IMR-90 (cell line): ENCODE measurements at regions of chr9 and their contacts with region 1.

Region 1: DNA sequence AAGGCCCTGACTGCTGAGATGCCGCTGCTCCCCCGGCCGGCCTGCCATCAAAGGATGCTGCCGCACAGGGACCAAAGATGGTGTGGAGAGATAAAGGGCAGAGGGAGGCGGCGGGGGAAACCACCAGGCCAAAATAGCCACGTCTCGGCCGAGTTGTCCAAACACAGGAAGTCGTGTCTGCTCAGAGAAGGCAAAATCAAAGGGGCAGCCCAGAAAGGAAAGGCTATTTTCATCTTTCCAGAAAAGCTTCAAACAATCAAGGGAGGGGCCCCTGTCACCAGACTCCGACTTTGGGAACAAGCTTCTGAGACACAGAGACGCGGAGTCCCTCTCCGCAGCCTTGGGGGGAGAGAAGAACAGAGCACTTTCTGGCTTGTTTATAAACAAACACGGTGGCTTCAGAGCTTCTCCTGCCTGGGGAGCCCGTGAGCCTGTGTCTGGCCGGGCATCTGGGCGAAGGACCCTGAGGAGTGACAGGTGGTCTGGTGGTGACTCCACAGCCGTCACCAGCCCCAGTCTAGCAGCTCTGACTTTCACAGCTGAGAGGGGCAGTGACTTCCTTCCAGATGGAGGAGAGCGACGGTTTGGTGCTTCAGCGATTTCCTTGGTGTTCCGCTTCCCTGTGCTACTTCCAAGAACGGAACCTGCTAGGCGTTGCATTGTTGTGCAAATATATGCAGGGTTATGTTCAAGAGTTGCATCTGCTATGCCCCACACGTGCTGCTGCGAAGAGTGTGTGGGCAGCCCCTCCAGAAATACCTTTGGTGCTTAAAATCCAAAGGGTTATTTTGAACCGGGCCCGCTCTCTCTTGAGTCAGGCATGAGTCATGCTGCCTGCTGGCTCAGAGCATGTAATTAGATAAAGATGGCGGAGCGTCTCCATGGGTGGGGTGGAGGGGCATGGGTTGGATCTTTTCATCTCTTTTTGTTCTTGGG is 24.0 kb downstream of the ADAMTSL2 start:
- DNase-seq: peak; percentile 85
- ATAC-seq: peak; percentile 88
- H3K4me3 ChIP-seq: no peak overlapping the region
- H3K27ac ChIP-seq: peak overlapping the region; percentile 0; the same call in 1 of the 2 replicates
- H3K4me1 ChIP-seq: peaks cover 18% of the 10 kb centered on the region
- H3K27me3 ChIP-seq: peaks cover 5% of the 10 kb centered on the region; the same call in 1 of the 2 replicates
- CTCF ChIP-seq: no peak
- POLR2A ChIP-seq: no peak
- RAD21 ChIP-seq: no peak

Region 2: DNA sequence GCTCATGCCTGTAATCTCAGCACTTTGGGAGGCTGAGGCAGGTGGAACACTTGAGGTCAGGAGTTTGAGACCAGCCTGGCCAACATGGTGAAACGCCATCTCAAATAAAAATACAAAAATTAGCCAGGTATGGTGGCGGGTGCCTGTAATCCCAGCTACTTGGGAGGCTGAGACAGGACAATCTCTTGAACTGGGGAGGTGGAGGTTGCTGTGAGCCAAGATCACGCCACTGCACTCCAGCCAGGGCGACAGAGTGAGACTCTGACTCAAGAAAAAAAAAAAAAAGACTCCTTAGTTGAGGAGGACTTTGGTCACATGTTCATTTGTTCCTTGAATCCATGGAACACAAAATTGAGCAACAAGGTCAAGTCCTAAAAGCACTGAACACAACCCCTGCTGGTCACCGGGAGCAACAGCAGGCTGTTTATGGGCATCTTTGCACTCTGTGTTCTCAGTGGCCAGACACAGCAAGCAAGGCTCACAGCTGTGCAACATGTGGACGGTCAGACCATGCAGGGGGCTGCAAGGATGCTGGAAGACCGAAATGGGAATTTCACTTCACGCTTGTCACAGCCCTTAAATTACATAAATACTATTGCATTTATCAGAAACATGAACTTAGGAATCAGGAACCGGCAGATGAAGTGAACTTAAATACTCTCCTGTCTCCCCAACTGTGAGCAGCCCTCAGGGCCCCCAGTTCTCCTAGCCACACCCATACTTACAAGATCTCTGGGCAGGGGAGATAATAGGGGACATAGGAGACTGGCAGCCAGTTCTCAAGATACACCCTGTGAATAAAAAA is 397.5 kb before region 1 on chr9:
- CTCF ChIA-PET with region 1: no interaction called
- POLR2A ChIA-PET with region 1: no interaction called
- dilution Hi-C with region 1: no loop called
- in situ Hi-C with region 1: no loop called
- intact Hi-C with region 1: no loop called
- DNase-seq: peak; percentile 61
- ATAC-seq: peak; percentile 72
- H3K4me3 ChIP-seq: no peak overlapping the region
- H3K27ac ChIP-seq: no peak overlapping the region
- H3K4me1 ChIP-seq: peaks cover 10% of the 10 kb centered on the region; the same call in 1 of the 2 replicates
- H3K27me3 ChIP-seq: no peaks in the 10 kb centered on the region; the same call in 1 of the 2 replicates
- CTCF ChIP-seq: peak; percentile 65
- POLR2A ChIP-seq: no peak
- RAD21 ChIP-seq: peak; percentile 35

Region 3: DNA sequence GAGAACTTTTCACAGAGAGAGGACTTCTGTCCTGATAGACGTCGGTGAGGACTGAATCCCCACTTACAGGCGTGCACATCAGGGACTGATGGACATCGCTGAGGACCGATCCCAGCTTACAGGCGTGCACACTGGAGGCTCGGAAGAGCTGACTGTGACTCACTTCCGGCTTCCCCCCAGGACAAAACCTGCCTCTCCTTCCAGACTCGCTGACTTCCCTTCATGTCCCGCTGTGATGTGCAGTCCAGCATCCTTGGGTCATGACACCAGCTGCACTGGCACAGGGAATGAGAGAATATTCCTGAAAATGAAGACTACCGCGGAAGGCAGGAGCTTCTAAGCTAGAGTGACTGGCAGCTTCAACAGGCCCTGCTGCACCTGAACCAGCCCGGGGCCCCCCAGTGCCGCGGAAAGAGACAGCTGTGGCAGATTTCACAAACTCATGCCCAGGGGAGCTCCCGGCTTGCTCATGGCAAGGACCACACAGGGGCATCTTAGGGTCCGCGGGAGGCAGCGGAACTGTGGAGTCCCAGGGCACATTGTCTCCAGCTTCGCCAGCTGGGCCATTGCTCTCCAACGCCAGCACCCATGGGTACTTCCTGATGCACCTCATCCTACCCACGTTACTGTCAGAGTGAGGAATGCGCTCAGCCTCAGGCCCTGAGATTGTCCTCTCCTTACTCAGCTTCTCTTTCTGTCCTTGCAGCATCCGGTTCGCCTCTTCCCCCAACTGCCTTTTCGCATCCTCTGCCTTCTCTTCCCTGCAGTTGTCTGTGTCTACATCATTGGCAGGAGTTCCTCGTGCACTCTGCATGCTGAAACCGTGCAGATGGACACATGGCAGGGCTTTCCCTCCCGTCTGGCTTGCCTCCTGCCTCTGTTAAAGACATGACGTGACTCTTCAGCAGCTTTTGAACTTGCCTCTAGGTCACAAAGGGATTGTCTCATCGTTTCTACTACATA is 251.9 kb before region 1 on chr9:
- CTCF ChIA-PET with region 1: no interaction called
- POLR2A ChIA-PET with region 1: no interaction called
- dilution Hi-C with region 1: no loop called
- in situ Hi-C with region 1: no loop called
- intact Hi-C with region 1: no loop called
- DNase-seq: no peak
- ATAC-seq: no peak
- H3K4me3 ChIP-seq: no peak overlapping the region
- H3K27ac ChIP-seq: no peak overlapping the region
- H3K4me1 ChIP-seq: no peaks in the 10 kb centered on the region
- H3K27me3 ChIP-seq: peaks cover 15% of the 10 kb centered on the region
- CTCF ChIP-seq: no peak
- POLR2A ChIP-seq: no peak
- RAD21 ChIP-seq: no peak

Region 4: GRCh38 chr9:133519693-133520092 is 38.8 kb before region 1 on chr9:
- CTCF ChIA-PET with region 1: no interaction called
- POLR2A ChIA-PET with region 1: no interaction called
- dilution Hi-C with region 1: no loop called
- in situ Hi-C with region 1: no loop called
- intact Hi-C with region 1: loop called (anchors 1 kb)
- DNase-seq: peak; percentile 12
- ATAC-seq: peak; percentile 46; the same call in 1 of the 2 replicates
- H3K4me3 ChIP-seq: no peak overlapping the region
- H3K27ac ChIP-seq: no peak overlapping the region
- H3K4me1 ChIP-seq: no peaks in the 10 kb centered on the region
- H3K27me3 ChIP-seq: peaks cover 70% of the 10 kb centered on the region
- CTCF ChIP-seq: no peak
- POLR2A ChIP-seq: no peak
- RAD21 ChIP-seq: no peak